SK-N-SH (cell line): ENCODE measurements at regions of chr6 and their contacts with region 1.

Region 1: DNA sequence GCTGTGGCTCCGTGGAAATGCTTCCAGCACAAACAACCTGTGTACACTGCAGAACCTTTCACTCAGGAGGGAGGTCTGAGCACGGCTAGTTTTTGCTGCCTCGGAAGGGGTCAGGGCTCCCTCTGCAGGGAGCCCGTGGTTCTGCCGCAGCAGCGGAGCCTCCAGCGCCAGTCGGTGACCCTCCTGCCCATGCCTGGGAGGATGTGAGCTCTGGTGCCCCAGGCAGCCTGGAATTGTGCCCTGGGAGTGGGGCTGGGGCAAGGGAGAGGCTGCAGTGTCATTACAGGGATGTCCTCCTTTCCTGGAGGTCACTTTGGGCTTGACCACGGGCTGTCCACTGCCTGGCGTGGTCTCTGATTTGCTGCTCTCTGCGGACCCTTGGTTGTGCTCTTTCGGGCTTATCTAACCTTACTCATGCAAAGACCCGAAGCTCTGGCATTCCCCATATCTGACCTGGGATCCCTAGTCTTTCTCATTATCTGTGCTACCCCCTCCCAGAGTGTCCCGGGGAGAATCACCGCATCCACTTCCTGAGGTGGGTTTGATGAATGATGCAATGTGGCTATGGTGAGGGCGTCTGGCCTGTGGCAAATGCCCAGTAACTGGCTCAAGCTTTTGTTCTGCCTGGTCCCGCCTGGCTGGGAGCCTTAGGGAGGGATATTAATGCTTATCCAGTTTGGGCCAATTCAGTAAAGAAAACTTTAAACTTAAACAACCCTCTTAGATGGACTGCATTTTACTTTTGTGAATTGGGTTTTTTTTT is 59.6 kb upstream of the TAGAP start:
- DNase-seq: peak; percentile 86
- H3K4me3 ChIP-seq: peak overlapping the region in 1 of 2 experiments; percentile 19; a peak in 1 of 4 replicates
- H3K27ac ChIP-seq: no peak overlapping the region
- H3K4me1 ChIP-seq: peaks cover 0 to 4% of the 10 kb centered on the region in 2 experiments; a peak in 1 of 4 replicates
- H3K27me3 ChIP-seq: peaks cover 5% of the 10 kb centered on the region; the same call in 1 of the 2 replicates
- CTCF ChIP-seq: peak; percentile 81
- EP300 ChIP-seq: no peak
- RAD21 ChIP-seq: peak; percentile 87

Region 2: DNA sequence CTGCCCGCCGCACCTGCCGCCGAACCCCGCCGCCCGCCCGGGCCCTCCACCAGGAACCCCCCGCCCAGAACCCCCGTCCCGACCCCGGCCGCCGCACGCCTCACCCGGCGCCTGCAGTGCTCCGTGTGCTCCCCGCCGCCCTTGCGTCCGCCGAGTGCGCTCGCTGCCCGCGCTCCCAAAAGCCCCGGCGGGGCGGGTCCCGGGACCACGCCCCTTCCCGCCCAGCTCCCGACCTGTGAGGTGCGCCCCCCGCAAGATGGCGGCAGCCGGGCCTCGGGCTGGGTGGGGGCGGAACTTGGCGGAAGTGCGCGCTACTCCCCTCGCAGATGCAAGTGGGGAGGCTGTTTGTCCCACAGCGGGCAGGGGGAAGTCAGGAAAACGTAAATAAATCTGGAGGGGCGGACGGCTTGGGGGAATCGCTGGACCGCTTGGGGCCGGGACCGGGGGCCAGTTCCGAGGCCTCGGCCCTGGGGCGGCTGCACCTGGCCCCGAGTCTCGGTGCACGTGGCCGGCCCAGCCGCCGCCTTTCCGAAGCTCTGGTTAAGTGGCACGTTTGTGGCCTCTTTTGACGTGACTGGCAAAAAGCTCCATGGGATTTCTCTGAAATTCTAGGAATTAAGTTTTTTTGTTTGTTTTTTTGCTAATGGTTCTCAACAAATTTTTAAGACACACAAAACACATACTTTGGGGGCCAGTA is 285.0 kb before region 1 on chr6 and contains the start of gene EZR:
- CTCF ChIA-PET with region 1: no interaction called
- POLR2A ChIA-PET with region 1: no interaction called
- DNase-seq: peak; percentile 96
- H3K4me3 ChIP-seq: peak within 1 kb of the TSS; percentile 76 to 79
- H3K27ac ChIP-seq: peak within 1 kb of the TSS; percentile 78 to 83
- H3K4me1 ChIP-seq: peaks cover 13 to 24% of the 10 kb centered on the region in 2 experiments; a peak in 2 of 4 replicates
- H3K27me3 ChIP-seq: no peaks in the 10 kb centered on the region
- CTCF ChIP-seq: peak; percentile 19; the same call in 1 of the 2 replicates
- EP300 ChIP-seq: no peak
- RAD21 ChIP-seq: no peak
- polyA plus RNA-seq, gene EZR: 84.3 and 92.0 TPM in 2 replicates

Region 3: GRCh38 chr6:159042003-159042825 is 62.1 kb before region 1 on chr6:
- CTCF ChIA-PET with region 1: interaction called, 152 read pairs
- POLR2A ChIA-PET with region 1: no interaction called
- DNase-seq: peak; percentile 68
- H3K4me3 ChIP-seq: no peak overlapping the region
- H3K27ac ChIP-seq: no peak overlapping the region
- H3K4me1 ChIP-seq: peaks cover 0 to 2% of the 10 kb centered on the region in 2 experiments; a peak in 1 of 4 replicates
- H3K27me3 ChIP-seq: peaks cover 37% of the 10 kb centered on the region
- CTCF ChIP-seq: peak; percentile 97
- EP300 ChIP-seq: no peak
- RAD21 ChIP-seq: peak; percentile 74

Region 4: GRCh38 chr6:159084493-159085091 is 19.8 kb before region 1 on chr6:
- CTCF ChIA-PET with region 1: interaction called, 23 read pairs
- POLR2A ChIA-PET with region 1: no interaction called
- DNase-seq: no peak
- H3K4me3 ChIP-seq: no peak overlapping the region
- H3K27ac ChIP-seq: no peak overlapping the region
- H3K4me1 ChIP-seq: no peaks in the 10 kb centered on the region
- H3K27me3 ChIP-seq: no peaks in the 10 kb centered on the region
- CTCF ChIP-seq: no peak
- EP300 ChIP-seq: no peak
- RAD21 ChIP-seq: no peak

Region 5: GRCh38 chr6:159125014-159125609 is 20.8 kb after region 1 on chr6:
- CTCF ChIA-PET with region 1: interaction called, 19 read pairs
- POLR2A ChIA-PET with region 1: no interaction called
- DNase-seq: no peak
- H3K4me3 ChIP-seq: no peak overlapping the region
- H3K27ac ChIP-seq: no peak overlapping the region
- H3K4me1 ChIP-seq: peaks cover 0 to 3% of the 10 kb centered on the region in 2 experiments; a peak in 1 of 4 replicates
- H3K27me3 ChIP-seq: no peaks in the 10 kb centered on the region; the same call in 1 of the 2 replicates
- CTCF ChIP-seq: peak; percentile 54
- EP300 ChIP-seq: no peak
- RAD21 ChIP-seq: no peak